ENCODE measurements at regions of chr10 and their contacts with region 1.

Region 1: DNA sequence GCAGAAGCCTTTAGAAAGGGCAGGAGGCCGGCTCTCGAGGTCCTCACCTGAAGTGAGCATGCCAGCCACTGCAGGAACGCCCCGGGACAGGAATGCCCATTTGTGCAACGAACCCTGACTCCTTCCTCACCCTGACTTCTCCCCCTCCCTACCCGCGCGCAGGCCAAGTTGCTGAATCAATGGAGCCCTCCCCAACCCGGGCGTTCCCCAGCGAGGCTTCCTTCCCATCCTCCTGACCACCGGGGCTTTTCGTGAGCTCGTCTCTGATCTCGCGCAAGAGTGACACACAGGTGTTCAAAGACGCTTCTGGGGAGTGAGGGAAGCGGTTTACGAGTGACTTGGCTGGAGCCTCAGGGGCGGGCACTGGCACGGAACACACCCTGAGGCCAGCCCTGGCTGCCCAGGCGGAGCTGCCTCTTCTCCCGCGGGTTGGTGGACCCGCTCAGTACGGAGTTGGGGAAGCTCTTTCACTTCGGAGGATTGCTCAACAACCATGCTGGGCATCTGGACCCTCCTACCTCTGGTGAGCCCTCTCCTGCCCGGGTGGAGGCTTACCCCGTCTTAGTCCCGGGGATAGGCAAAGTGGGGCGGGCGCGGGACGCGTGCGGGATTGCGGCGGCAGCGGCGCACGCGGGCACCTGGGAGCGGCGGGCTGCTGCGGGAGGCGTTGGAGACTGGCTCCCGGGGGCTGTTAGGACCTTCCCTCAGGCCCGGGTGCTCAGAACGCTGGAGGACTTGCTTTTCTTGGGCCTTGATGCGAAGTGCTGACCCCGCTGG is at the start of gene FAS:
- DNase-seq: peak; percentile 86
- H3K4me3 Mint-ChIP-seq: peak within 1 kb of the TSS; percentile 99
- H3K27ac Mint-ChIP-seq: peak within 1 kb of the TSS; percentile 99
- H3K4me1 Mint-ChIP-seq: peaks cover 71% of the 10 kb centered on the region
- H3K27me3 Mint-ChIP-seq: no peaks in the 10 kb centered on the region
- total RNA-seq, gene FAS: 91.1 to 96.4 TPM

Region 2: GRCh38 chr10:88880282-88881076 is 110.1 kb before region 1 on chr10:
- CTCF ChIA-PET with region 1: interaction called, 4 read pairs
- POLR2A ChIA-PET with region 1: interaction called, 46 read pairs
- DNase-seq: peak; percentile 84
- H3K4me3 Mint-ChIP-seq: peak overlapping the region; percentile 97
- H3K27ac Mint-ChIP-seq: peak overlapping the region; percentile 99
- H3K4me1 Mint-ChIP-seq: peaks cover 60% of the 10 kb centered on the region
- H3K27me3 Mint-ChIP-seq: no peaks in the 10 kb centered on the region

Region 3: DNA sequence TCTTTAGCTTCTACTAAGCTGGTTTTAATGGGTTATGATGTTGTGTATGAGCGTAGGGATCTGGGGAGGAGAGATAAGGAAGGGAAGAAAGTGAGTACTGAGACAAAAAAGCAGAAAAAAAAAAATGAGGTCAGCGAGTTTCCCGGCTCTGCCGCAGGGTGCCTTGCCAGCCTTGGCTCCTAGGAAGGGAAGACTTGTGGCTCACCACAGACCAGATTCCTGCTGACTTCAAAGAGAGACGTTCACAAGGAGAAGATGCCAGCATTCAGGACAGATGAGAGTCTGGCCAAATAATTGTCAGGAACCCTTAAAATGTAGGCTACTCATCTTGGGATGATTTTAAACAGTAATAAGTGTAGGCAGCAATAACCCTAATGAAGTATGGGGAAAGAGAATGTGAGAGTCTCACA is 11.4 kb before region 1 on chr10:
- CTCF ChIA-PET with region 1: interaction called, 10 read pairs
- POLR2A ChIA-PET with region 1: interaction called, 57 read pairs
- DNase-seq: no peak
- H3K4me3 Mint-ChIP-seq: no peak overlapping the region
- H3K27ac Mint-ChIP-seq: no peak overlapping the region
- H3K4me1 Mint-ChIP-seq: peaks cover 37% of the 10 kb centered on the region
- H3K27me3 Mint-ChIP-seq: no peaks in the 10 kb centered on the region

Region 4: DNA sequence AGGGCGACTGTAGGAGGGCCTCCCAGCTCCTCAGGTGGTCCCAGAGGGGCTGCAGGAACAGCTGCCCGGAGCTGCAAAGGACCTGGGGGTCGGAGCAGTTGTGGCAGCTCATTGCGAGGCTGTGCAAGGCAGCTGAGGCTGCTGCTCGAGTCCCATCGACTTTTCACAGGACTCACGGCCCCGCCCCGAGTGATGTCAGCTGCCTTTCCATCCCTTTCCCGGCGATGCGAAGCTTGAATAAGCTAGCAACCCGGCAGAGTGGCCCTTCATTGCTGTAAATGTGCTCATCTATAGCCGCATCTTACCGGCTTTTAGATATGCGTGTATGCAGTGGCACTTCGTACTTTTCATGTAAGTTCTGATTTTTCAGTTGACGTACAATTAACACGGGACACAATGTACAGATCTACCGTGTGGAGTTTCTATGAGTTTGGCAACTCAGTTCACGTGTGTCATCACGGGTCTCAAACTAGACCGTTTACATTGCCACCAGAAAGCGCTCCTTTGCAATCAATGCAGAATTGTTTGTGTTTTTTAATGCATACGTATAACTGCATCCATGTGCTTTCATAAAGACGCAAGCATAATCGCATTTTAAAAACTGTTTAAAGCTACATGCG is 216.7 kb after region 1 on chr10 and contains the start of gene CH25H:
- CTCF ChIA-PET with region 1: no interaction called
- POLR2A ChIA-PET with region 1: interaction called, 16 read pairs
- DNase-seq: peak; percentile 42
- H3K4me3 Mint-ChIP-seq: peak within 1 kb of the TSS; percentile 71
- H3K27ac Mint-ChIP-seq: peak within 1 kb of the TSS; percentile 2
- H3K4me1 Mint-ChIP-seq: peaks cover 22% of the 10 kb centered on the region
- H3K27me3 Mint-ChIP-seq: peaks cover 32% of the 10 kb centered on the region
- total RNA-seq, gene CH25H: not detected

Region 5: GRCh38 chr10:89384474-89385340 is 394.1 kb after region 1 on chr10:
- CTCF ChIA-PET with region 1: no interaction called
- POLR2A ChIA-PET with region 1: no interaction called
- DNase-seq: no peak
- H3K4me3 Mint-ChIP-seq: no peak overlapping the region
- H3K27ac Mint-ChIP-seq: no peak overlapping the region
- H3K4me1 Mint-ChIP-seq: peaks cover 2% of the 10 kb centered on the region
- H3K27me3 Mint-ChIP-seq: peaks cover 7% of the 10 kb centered on the region

Region 6: GRCh38 chr10:89414146-89414878 is 423.7 kb after region 1 on chr10 and contains the start of gene IFIT5:
- CTCF ChIA-PET with region 1: no interaction called
- POLR2A ChIA-PET with region 1: interaction called, 10 read pairs
- DNase-seq: peak; percentile 71
- H3K4me3 Mint-ChIP-seq: peak within 1 kb of the TSS; percentile 95
- H3K27ac Mint-ChIP-seq: peak within 1 kb of the TSS; percentile 98
- H3K4me1 Mint-ChIP-seq: peaks cover 63% of the 10 kb centered on the region
- H3K27me3 Mint-ChIP-seq: no peaks in the 10 kb centered on the region
- total RNA-seq, gene IFIT5: 44.0 to 45.1 TPM

Measured in activated CD4-positive, alpha-beta memory T cell treated with anti-CD3 and anti-CD28 coated beads, Interleukin-2, amount 10 ng/mL, durations not matched to agents 7 days and 5 days (primary cell).